Naive thymus-derived CD4-positive, alpha-beta T cell (primary cell): ENCODE measurements at regions of chr21 and their contacts with region 1.

Region 1: DNA sequence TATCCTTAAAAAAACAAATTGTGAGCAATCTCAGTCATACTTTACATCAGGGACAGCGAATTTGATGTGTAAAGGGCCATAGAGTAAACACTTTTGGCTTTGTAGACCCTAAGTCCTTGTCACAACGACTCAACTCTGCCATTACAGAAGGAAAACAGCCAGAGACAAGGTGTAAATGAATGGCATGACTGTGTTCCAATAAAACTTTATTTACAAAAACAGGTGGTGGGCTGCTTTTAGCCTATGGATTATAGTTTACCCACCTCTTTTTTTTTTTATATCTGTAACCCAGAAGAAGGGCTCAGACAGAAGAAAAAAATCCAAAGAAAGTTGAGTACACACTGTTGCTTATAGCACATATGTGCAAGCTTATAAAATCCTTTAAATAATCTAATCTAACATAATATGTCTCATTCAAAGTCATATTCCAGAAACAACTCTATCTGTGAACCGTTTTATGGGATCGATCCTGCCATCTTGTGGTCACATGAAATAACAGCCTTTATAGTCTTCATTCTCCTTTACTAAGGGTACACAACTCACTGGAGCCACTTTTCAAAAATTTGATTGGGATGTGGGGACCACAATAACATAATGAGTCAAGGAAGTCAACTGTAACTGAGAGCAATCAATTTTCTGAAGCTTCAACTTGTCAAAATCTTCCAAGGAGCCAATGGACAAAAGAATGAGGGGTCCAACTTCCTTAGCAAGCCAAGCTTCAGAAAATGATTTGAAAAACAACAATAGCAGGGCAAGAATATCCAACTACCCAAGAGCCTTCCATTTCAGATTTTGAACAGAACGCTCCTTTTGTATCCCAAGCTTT is 142.2 kb upstream of the KRTAP19-8 start:
- DNase-seq: peak in 6 of 9 donors; percentile 33 to 65 (median 50)
- ATAC-seq: peak; percentile 30
- H3K4me3 ChIP-seq: peak overlapping the region; percentile 46
- H3K4me3 Mint-ChIP-seq: peak overlapping the region; percentile 82 to 100 (median 87)
- H3K27ac ChIP-seq: peak overlapping the region; percentile 79
- H3K27ac Mint-ChIP-seq: peak overlapping the region; percentile 96 to 100 (median 99)
- H3K4me1 ChIP-seq: peaks cover 12 to 73% of the 10 kb centered on the region in 2 donors
- H3K4me1 Mint-ChIP-seq: peaks cover 44 to 92% (median 72%) of the 10 kb centered on the region in 7 donors
- H3K27me3 ChIP-seq: no peaks in the 10 kb centered on the region
- H3K27me3 Mint-ChIP-seq: no peaks in the 10 kb centered on the region

Region 2: GRCh38 chr21:31098576-31099005 is 81.9 kb before region 1 on chr21:
- CTCF ChIA-PET with region 1: interaction called, 49 read pairs
- POLR2A ChIA-PET with region 1: interaction called, 19 read pairs
- intact Hi-C with region 1: loop called (anchors 1 kb)
- DNase-seq: peak; percentile 44 to 77 (median 62)
- ATAC-seq: peak; percentile 91
- H3K4me3 ChIP-seq: no peak overlapping the region
- H3K4me3 Mint-ChIP-seq: peak overlapping the region in 4 of 10 donors; percentile 15 to 56 (median 46)
- H3K27ac ChIP-seq: no peak overlapping the region
- H3K27ac Mint-ChIP-seq: peak overlapping the region in 1 of 9 donors; percentile 62
- H3K4me1 ChIP-seq: peaks cover 3 to 19% of the 10 kb centered on the region in 2 donors
- H3K4me1 Mint-ChIP-seq: peaks cover 12 to 35% (median 28%) of the 10 kb centered on the region in 7 donors
- H3K27me3 ChIP-seq: no peaks in the 10 kb centered on the region
- H3K27me3 Mint-ChIP-seq: peaks cover 0 to 15% (median 6%) of the 10 kb centered on the region in 5 donors

Region 3: DNA sequence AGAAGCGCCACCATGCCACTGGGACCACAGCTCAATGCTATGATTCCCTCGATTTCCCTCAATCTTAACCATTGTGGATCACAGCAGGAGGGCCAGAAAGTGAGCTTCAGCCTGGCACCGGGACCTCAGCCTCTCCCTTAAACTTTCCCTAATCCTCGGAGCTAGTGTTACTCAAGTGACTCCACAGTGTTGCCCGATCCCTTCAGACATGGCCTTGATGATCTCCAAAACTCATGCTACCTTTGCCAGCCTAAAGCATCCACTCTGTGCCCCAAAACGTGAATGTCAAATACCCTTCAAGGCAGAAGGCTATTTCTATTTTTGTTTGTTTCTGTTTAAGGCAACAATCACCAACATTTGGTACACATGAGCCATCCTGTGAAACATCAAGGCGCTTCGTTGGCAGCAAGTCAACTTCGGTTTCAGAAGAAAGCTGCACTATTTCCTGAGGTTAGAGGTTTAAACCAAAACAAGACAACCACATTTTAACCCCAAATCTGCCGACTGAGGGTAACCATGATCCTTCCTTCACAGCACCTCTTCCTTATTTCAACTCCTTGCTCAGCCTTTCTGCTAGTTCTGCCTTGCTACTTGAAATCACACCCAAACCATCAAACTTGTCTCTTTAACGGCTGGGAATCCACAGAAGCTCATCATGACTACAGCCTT is 47.8 kb before region 1 on chr21:
- CTCF ChIA-PET with region 1: interaction called, 40 read pairs
- POLR2A ChIA-PET with region 1: interaction called, 39 read pairs
- intact Hi-C with region 1: loop called (anchors 1 kb)
- DNase-seq: peak in 8 of 9 donors; percentile 58 to 94 (median 92)
- ATAC-seq: peak; percentile 96
- H3K4me3 ChIP-seq: peak overlapping the region; percentile 59
- H3K4me3 Mint-ChIP-seq: peak overlapping the region; percentile 83 to 91 (median 86)
- H3K27ac ChIP-seq: no peak overlapping the region
- H3K27ac Mint-ChIP-seq: peak overlapping the region; percentile 84 to 96 (median 94)
- H3K4me1 ChIP-seq: peaks cover 25 to 50% of the 10 kb centered on the region in 2 donors
- H3K4me1 Mint-ChIP-seq: peaks cover 41 to 75% (median 69%) of the 10 kb centered on the region in 7 donors
- H3K27me3 ChIP-seq: no peaks in the 10 kb centered on the region
- H3K27me3 Mint-ChIP-seq: no peaks in the 10 kb centered on the region

Region 4: DNA sequence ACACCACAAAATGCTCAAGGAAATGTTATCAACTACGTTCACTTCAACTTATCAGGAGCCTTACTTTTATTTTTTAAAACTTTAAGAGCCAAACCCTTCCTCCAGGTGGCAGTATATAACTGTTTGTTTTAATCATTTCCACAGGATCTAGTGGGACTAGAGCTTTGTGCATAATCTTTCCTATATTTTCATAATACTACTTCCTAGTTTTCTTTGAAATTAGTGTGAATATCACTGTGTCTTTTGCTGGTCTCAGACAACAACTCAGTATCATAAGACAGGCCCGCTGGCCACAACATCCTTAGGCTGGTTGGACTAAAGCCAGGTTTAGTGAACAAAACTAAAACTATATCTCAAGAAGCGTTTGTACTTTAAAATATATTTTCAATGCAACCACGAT is 18.1 kb after region 1 on chr21:
- CTCF ChIA-PET with region 1: interaction called, 14 read pairs
- POLR2A ChIA-PET with region 1: interaction called, 75 read pairs
- intact Hi-C with region 1: loop called (anchors 1 to 2 kb)
- DNase-seq: peak in 5 of 9 donors; percentile 51 to 63 (median 58)
- ATAC-seq: peak; percentile 74
- H3K4me3 ChIP-seq: no peak overlapping the region
- H3K4me3 Mint-ChIP-seq: peak overlapping the region in 3 of 10 donors; percentile 11 to 40 (median 13)
- H3K27ac ChIP-seq: no peak overlapping the region
- H3K27ac Mint-ChIP-seq: no peak overlapping the region
- H3K4me1 ChIP-seq: no peaks in the 10 kb centered on the region
- H3K4me1 Mint-ChIP-seq: peaks cover 14 to 42% (median 36%) of the 10 kb centered on the region in 7 donors
- H3K27me3 ChIP-seq: no peaks in the 10 kb centered on the region
- H3K27me3 Mint-ChIP-seq: no peaks in the 10 kb centered on the region

Region 5: DNA sequence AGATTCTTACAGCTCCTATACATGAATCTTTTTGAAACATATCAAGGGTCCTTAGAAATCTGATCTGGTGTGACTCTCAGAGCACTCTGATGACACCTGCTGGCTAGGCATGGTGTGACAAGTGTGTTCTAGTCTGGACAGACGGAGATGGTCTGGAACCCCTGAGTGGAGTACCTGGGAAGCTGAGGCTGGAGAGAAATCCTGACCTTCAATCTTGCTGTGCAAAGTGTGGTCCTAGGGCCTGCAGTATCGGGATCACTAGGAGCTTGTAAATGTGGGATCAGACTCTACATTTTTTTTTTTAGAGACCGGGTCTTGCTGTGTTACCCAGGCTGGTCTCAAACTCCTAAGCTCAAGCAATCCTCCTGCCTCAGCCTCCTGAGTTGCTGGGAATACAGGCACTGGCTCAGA is 400.4 kb after region 1 on chr21:
- CTCF ChIA-PET with region 1: interaction called, 18 read pairs
- POLR2A ChIA-PET with region 1: interaction called, 4 read pairs
- intact Hi-C with region 1: loop called in 1 of 2 experiments (anchors 1 kb)
- DNase-seq: peak; percentile 50 to 77 (median 66)
- ATAC-seq: peak; percentile 90
- H3K4me3 ChIP-seq: no peak overlapping the region
- H3K4me3 Mint-ChIP-seq: no peak overlapping the region
- H3K27ac ChIP-seq: no peak overlapping the region
- H3K27ac Mint-ChIP-seq: peak overlapping the region in 3 of 9 donors; percentile 10 to 76 (median 32)
- H3K4me1 ChIP-seq: no peaks in the 10 kb centered on the region
- H3K4me1 Mint-ChIP-seq: peaks cover 0 to 8% (median 4%) of the 10 kb centered on the region in 7 donors
- H3K27me3 ChIP-seq: no peaks in the 10 kb centered on the region
- H3K27me3 Mint-ChIP-seq: peaks cover 0 to 25% (median 0%) of the 10 kb centered on the region in 5 donors

Region 6: GRCh38 chr21:31731802-31732596 is 551.5 kb after region 1 on chr21 and contains the start of gene SCAF4:
- CTCF ChIA-PET with region 1: no interaction called
- POLR2A ChIA-PET with region 1: no interaction called
- intact Hi-C with region 1: loop called (anchors 1 to 5 kb)
- DNase-seq: peak; percentile 64 to 86 (median 72)
- ATAC-seq: peak; percentile 95
- H3K4me3 ChIP-seq: peak within 1 kb of the TSS; percentile 80
- H3K4me3 Mint-ChIP-seq: peak within 1 kb of the TSS in 6 of 10 donors; percentile 67 to 94 (median 90)
- H3K27ac ChIP-seq: peak within 1 kb of the TSS; percentile 95
- H3K27ac Mint-ChIP-seq: peak within 1 kb of the TSS; percentile 32 to 96 (median 83)
- H3K4me1 ChIP-seq: peaks cover 24 to 39% of the 10 kb centered on the region in 2 donors
- H3K4me1 Mint-ChIP-seq: peaks cover 13 to 19% (median 15%) of the 10 kb centered on the region in 7 donors
- H3K27me3 ChIP-seq: no peaks in the 10 kb centered on the region
- H3K27me3 Mint-ChIP-seq: peaks cover 0 to 2% (median 0%) of the 10 kb centered on the region in 5 donors
- total RNA-seq, gene SCAF4: 54.8 to 69.7 (median 64.7) TPM